ENCODE measurements at regions of chr10 and their contacts with region 1.

Region 1: DNA sequence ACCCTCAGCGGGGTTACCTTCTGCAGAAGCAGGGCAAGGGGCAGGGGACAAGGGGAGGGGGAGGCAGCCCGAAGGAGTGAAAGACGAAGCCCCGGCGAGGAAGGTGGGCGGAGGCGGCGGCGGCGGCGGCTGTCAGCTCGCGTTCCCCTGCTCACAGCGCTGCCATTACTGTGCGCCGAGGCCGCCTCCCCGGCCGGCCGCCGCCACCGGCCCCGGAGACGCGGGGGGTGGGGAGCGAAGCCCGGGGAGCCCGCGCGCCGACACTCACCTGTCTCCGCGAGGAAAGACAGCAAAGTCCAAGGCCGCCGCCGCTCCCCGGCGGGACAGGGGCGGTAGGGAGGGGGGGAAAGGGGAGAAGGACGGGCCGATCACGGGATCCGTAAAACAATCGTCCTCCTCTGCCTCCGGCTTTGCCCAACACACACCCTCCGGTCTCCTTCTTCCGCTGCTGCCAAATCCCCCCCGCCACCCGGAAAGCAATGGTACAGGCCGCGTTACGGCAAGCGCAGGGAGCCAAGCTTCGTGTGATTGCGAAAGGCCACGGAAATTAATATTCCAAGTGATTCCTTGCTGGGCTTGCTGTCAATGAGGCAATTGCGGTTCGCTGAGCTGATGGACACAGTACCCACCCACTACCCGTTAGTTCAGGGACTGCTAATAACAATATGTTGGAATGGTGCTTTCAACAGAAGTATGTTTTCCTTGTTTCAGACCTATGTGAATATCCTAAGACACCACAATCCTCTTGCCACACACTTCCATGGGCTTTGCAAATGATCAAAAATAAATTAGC is at the start of gene CUL2:
- DNase-seq: peak; percentile 91
- H3K4me3 Mint-ChIP-seq: peak within 1 kb of the TSS; percentile 94
- H3K27ac Mint-ChIP-seq: peak within 1 kb of the TSS; percentile 95
- H3K4me1 Mint-ChIP-seq: peaks cover 35% of the 10 kb centered on the region
- H3K27me3 Mint-ChIP-seq: no peaks in the 10 kb centered on the region
- total RNA-seq, gene CUL2: 43.0 and 49.0 TPM in 2 replicates

Region 2: GRCh38 chr10:34994565-34995142 is 95.7 kb before region 1 on chr10:
- intact Hi-C with region 1: loop called (anchors 5 kb)
- DNase-seq: peak; percentile 58
- H3K4me3 Mint-ChIP-seq: no peak overlapping the region
- H3K27ac Mint-ChIP-seq: peak overlapping the region; percentile 28
- H3K4me1 Mint-ChIP-seq: peaks cover 12% of the 10 kb centered on the region
- H3K27me3 Mint-ChIP-seq: no peaks in the 10 kb centered on the region

Region 3: DNA sequence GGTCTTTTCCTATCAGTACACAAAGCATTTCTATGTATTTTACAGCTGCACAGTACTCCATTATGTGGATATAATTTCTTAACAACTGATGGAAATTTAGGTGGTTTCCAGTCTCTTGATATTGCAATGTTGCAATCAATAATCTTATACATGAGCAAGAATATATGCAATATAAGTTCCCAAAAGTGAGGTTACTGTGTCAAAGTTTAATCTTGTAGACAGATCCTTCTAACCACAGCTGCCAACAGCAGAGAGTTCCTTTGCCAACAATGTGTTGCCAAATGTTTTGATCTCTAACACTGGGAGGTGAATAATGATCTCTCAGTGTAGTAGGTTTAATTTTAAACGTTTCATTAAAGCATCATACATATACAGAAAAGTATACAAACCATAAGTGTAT is 54.8 kb before region 1 on chr10:
- intact Hi-C with region 1: no loop called
- DNase-seq: no peak
- H3K4me3 Mint-ChIP-seq: no peak overlapping the region
- H3K27ac Mint-ChIP-seq: no peak overlapping the region
- H3K4me1 Mint-ChIP-seq: peaks cover 11% of the 10 kb centered on the region
- H3K27me3 Mint-ChIP-seq: no peaks in the 10 kb centered on the region